Psoas muscle (tissue), 8 donors: ENCODE measurements at regions of chr14 and their contacts with region 1.

Region 1: DNA sequence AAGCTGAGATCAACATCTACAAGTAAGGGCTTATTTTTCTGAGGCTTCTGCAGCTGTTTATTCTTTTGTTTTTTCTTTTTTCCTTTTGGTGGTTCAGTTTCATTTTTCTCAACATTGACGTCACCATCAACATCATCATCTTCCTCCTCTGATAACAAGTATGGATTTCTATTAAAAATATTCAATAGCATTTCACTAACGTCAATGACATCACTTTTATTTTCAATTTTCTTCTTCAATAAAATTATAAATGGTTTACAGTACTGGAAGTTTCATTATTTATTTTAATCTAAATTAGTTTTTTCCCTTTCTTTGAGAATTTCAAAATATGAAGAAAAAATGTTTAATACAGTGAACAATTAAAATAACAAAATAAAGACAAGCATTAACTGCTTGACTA is 23.9 kb downstream of the NEMF start:
- DNase-seq: no peak
- ATAC-seq: no peak
- H3K4me3 ChIP-seq: no peak overlapping the region
- H3K27ac ChIP-seq: no peak overlapping the region
- H3K4me1 ChIP-seq: no peaks in the 10 kb centered on the region
- H3K27me3 ChIP-seq: no peaks in the 10 kb centered on the region
- CTCF ChIP-seq: no peak

Region 2: GRCh38 chr14:49778421-49778820 is 50.2 kb before region 1 on chr14:
- intact Hi-C with region 1: loop called in 1 of 2 experiments (anchors 5 kb)
- DNase-seq: no peak
- ATAC-seq: no peak
- H3K4me3 ChIP-seq: no peak overlapping the region
- H3K27ac ChIP-seq: no peak overlapping the region
- H3K4me1 ChIP-seq: no peaks in the 10 kb centered on the region
- H3K27me3 ChIP-seq: no peaks in the 10 kb centered on the region
- CTCF ChIP-seq: no peak

Region 3: DNA sequence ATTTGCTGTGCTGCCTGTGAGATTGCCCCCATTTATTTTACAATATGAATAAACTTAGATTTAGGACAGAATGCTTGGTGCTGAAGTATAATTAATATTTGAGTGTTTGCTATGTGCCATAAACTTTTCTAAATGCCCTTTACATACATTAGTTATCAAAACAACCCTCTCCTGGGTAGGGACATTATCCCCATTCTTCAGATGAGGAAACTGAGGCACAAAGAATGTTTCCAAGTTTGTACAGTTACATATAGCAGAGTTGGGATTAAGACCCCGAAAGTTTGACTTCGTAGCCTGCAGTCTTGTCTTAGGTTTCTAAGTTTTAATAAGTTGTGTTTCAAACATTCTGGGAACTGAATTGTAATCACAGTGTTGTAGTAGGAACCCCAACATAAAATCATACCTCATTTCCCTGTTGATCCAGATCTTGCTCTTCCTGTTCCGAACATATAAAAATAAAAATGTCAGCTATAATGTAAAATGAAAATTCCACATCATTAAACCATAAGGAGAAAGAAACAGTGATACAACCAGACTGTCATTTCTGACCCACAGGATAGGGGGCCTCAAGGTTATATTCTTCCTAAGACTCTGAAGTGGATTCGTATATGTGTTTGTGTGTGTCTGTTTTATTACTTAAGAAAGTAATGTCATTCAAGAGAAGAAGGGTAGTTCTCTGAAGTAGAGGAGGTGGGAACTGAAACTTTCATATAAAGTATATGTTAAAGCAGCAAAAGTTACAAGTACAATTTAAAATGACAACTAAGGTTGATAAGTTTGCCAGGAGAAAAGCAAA is 42.1 kb before region 1 on chr14:
- intact Hi-C with region 1: loop called in 1 of 2 experiments (anchors 5 kb)
- DNase-seq: no peak
- ATAC-seq: no peak
- H3K4me3 ChIP-seq: no peak overlapping the region
- H3K27ac ChIP-seq: no peak overlapping the region
- H3K4me1 ChIP-seq: no peaks in the 10 kb centered on the region
- H3K27me3 ChIP-seq: no peaks in the 10 kb centered on the region
- CTCF ChIP-seq: no peak

Region 4: GRCh38 chr14:49796025-49796424 is 32.6 kb before region 1 on chr14:
- intact Hi-C with region 1: loop called in 1 of 2 experiments (anchors 5 kb)
- DNase-seq: no peak
- ATAC-seq: no peak
- H3K4me3 ChIP-seq: no peak overlapping the region
- H3K27ac ChIP-seq: no peak overlapping the region
- H3K4me1 ChIP-seq: no peaks in the 10 kb centered on the region
- H3K27me3 ChIP-seq: no peaks in the 10 kb centered on the region
- CTCF ChIP-seq: no peak